Activated T-helper 2 cell treated with anti-CD3 and anti-CD28 coated beads, Interferon-gamma antibody, Interleukin-2, Interleukin-4, amounts not matched to agents 10 μg/mL and 5 μg/mL and 100 μg/mL, durations not matched to agents 14 hours and 24 hours and 36 hours (primary cell): ENCODE measurements at regions of chr14 and their contacts with region 1.

Region 1: GRCh38 chr14:35808076-35808652 is 931 bp downstream of the RALGAPA1 start:
- DNase-seq: no peak
- H3K4me3 Mint-ChIP-seq: peak overlapping the region; percentile 99
- H3K27ac Mint-ChIP-seq: peak overlapping the region; percentile 94
- H3K4me1 Mint-ChIP-seq: peaks cover 21% of the 10 kb centered on the region
- H3K27me3 Mint-ChIP-seq: peaks cover 7% of the 10 kb centered on the region

Region 2: GRCh38 chr14:35121887-35122695 is 686.1 kb before region 1 on chr14 and contains the starts of genes PPP2R3C and PRORP:
- intact Hi-C with region 1: loop called (anchors 5 kb)
- DNase-seq: peak; percentile 88
- H3K4me3 Mint-ChIP-seq: peak within 1 kb of the TSS; percentile 96
- H3K27ac Mint-ChIP-seq: peak within 1 kb of the TSS; percentile 100
- H3K4me1 Mint-ChIP-seq: peaks cover 41% of the 10 kb centered on the region
- H3K27me3 Mint-ChIP-seq: no peaks in the 10 kb centered on the region
- total RNA-seq, gene PPP2R3C: 48.1 and 49.7 TPM in 2 replicates
- total RNA-seq, gene PRORP: 37.0 and 41.3 TPM in 2 replicates

Region 3: GRCh38 chr14:35553808-35554207 is 254.4 kb before region 1 on chr14:
- intact Hi-C with region 1: no loop called
- DNase-seq: no peak
- H3K4me3 Mint-ChIP-seq: no peak overlapping the region
- H3K27ac Mint-ChIP-seq: no peak overlapping the region
- H3K4me1 Mint-ChIP-seq: no peaks in the 10 kb centered on the region
- H3K27me3 Mint-ChIP-seq: no peaks in the 10 kb centered on the region

Region 4: DNA sequence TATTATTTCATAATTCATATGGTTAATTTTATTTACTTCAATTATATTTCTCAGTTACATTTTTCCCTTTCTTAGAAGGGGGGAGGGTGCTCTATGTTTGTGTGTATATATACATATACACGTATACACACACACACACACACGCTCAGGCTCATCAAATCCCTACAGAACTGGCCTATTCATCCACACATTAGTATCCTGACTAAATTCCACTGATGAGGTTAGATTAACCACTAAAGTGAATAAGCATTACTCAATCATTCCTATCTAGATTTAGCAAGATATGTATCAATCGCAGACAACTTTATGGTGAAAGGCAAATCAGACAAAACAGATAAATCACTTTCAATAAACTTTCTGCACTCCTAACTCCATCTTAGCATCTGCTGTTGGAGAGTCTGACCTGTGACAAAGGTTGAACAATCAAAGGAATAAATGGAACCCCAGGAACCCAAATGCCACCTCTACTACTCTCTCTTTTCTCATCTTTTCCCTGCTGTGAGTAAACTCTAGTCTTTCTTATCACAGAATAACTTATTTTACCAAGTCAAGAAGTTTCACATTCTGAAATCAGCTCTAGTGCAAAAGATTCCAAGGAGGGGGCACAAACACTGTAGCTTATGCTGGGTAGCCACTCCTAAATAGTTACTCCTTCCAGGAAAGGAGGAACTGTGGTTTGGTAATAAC is 66.7 kb before region 1 on chr14:
- intact Hi-C with region 1: loop called (anchors 5 kb)
- DNase-seq: no peak
- H3K4me3 Mint-ChIP-seq: no peak overlapping the region
- H3K27ac Mint-ChIP-seq: peak overlapping the region; percentile 54
- H3K4me1 Mint-ChIP-seq: peaks cover 22% of the 10 kb centered on the region
- H3K27me3 Mint-ChIP-seq: peaks cover 3% of the 10 kb centered on the region

Region 5: DNA sequence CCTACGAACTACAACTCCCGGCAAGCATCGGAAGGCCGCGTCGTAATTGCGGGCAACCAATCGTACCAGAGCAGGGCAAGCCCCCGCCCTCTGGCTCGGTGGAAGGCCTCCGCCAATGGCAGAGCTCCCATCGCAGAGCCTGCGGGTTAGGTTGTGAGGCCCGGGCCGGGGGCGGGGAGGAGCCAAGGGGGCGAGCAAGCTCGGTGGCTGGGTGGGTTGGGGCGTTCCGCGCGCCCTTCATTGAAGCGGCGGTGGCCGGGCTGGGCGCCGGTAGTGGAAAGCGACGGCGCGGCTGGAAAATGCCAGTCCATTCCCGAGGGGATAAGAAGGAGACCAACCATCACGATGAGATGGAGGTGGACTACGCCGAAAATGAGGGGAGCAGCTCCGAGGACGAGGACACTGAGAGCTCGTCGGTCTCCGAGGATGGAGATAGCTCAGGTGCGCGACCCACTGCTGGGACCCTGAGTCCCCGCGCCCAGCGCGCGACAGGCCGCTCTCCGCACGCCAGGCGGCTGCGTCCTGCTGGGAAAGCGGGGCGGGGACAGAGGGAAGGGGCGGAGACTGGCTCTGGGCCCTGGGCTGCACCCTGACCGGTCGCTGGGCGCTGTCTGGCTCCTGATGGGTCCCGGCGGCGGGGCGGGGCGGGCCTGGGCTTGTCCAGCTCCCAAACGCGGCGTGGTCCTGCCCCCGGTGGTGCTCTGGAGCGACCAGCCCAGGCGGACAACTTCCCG is 18.2 kb after region 1 on chr14 and contains the start of gene BRMS1L:
- intact Hi-C with region 1: loop called (anchors 1 kb)
- DNase-seq: peak; percentile 96
- H3K4me3 Mint-ChIP-seq: peak within 1 kb of the TSS; percentile 84
- H3K27ac Mint-ChIP-seq: peak within 1 kb of the TSS; percentile 90
- H3K4me1 Mint-ChIP-seq: peaks cover 21% of the 10 kb centered on the region
- H3K27me3 Mint-ChIP-seq: no peaks in the 10 kb centered on the region
- total RNA-seq, gene BRMS1L: 5.3 and 6.1 TPM in 2 replicates